ENCODE measurements at regions of chr18 and their contacts with region 1.

Region 1: GRCh38 chr18:8685141-8685913 is 20.0 kb upstream of the MTCL1 start:
- DNase-seq: peak; percentile 85
- H3K4me3 Mint-ChIP-seq: peak overlapping the region; percentile 54
- H3K27ac Mint-ChIP-seq: peak overlapping the region; percentile 92
- H3K4me1 Mint-ChIP-seq: peaks cover 9% of the 10 kb centered on the region
- H3K27me3 Mint-ChIP-seq: no peaks in the 10 kb centered on the region
- CTCF ChIP-seq: no peak

Region 2: GRCh38 chr18:8673256-8674209 is 11.8 kb before region 1 on chr18:
- CTCF ChIA-PET with region 1: interaction called, 4 read pairs
- POLR2A ChIA-PET with region 1: interaction called, 11 read pairs
- intact Hi-C with region 1: no loop called
- DNase-seq: no peak
- H3K4me3 Mint-ChIP-seq: no peak overlapping the region
- H3K27ac Mint-ChIP-seq: no peak overlapping the region
- H3K4me1 Mint-ChIP-seq: no peaks in the 10 kb centered on the region
- H3K27me3 Mint-ChIP-seq: no peaks in the 10 kb centered on the region
- CTCF ChIP-seq: no peak

Region 3: DNA sequence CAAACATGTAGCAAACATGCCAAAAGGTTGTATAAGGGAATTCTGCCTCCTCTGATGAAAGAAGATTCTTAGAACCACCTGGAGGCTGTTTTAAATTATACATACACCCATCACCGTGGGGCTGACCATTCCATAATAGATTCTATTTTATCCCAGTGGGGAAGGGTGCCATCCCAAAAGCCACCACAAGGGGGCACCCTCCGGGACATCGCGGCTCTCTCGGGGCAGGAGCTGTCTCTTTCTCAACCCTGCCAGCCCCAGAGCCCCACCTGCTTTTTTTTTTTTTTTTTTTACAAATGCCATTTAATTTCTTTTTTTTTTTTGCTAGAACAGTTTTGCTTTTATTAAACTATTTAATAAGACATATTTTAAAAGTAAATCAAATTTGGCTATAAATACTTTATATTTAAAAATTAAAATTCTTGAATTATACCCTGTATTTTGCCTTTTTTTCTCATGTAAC is 11.5 kb after region 1 on chr18:
- CTCF ChIA-PET with region 1: interaction called, 25 read pairs
- POLR2A ChIA-PET with region 1: interaction called, 5 read pairs
- intact Hi-C with region 1: no loop called
- DNase-seq: peak; percentile 63
- H3K4me3 Mint-ChIP-seq: no peak overlapping the region
- H3K27ac Mint-ChIP-seq: no peak overlapping the region
- H3K4me1 Mint-ChIP-seq: peaks cover 4% of the 10 kb centered on the region
- H3K27me3 Mint-ChIP-seq: no peaks in the 10 kb centered on the region
- CTCF ChIP-seq: peak; percentile 61

Region 4: GRCh38 chr18:8704361-8705279 is 19.3 kb after region 1 on chr18:
- CTCF ChIA-PET with region 1: interaction called, 4 read pairs
- POLR2A ChIA-PET with region 1: interaction called, 23 read pairs
- intact Hi-C with region 1: no loop called
- DNase-seq: peak; percentile 87
- H3K4me3 Mint-ChIP-seq: peak overlapping the region; percentile 90
- H3K27ac Mint-ChIP-seq: no peak overlapping the region
- H3K4me1 Mint-ChIP-seq: peaks cover 27% of the 10 kb centered on the region
- H3K27me3 Mint-ChIP-seq: no peaks in the 10 kb centered on the region
- CTCF ChIP-seq: no peak